Panc1 (cell line): ENCODE measurements at regions of chr6 and their contacts with region 1.

Region 1: DNA sequence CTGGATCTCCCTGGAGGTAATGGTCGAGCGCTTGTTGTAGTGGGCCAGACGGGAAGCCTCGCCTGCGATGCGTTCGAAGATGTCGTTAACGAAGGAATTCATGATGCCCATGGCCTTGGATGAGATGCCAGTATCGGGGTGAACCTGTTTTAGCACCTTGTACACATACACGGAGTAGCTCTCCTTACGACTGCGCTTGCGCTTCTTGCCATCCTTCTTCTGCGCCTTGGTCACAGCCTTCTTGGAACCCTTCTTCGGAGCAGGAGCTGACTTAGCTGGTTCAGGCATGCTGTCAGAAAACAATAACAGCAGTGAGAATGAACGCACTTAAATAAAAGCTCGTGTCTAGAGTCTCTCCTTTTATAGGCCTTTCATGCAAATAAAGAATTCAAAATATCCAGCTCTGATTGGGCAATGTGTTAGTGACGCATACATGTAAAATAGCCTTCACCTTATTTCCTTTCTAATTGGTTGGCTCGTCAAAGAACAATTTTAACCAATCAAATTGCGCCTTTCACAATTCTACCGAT is 129.2 kb downstream of the HFE start:
- DNase-seq: peak; percentile 99
- ATAC-seq: peak; percentile 79
- H3K4me3 ChIP-seq: peak overlapping the region; percentile 75 to 78
- H3K27ac ChIP-seq: peak overlapping the region; percentile 98
- H3K4me1 ChIP-seq: peaks cover 21% of the 10 kb centered on the region
- H3K27me3 ChIP-seq: no peaks in the 10 kb centered on the region
- CTCF ChIP-seq: no peak

Region 2: DNA sequence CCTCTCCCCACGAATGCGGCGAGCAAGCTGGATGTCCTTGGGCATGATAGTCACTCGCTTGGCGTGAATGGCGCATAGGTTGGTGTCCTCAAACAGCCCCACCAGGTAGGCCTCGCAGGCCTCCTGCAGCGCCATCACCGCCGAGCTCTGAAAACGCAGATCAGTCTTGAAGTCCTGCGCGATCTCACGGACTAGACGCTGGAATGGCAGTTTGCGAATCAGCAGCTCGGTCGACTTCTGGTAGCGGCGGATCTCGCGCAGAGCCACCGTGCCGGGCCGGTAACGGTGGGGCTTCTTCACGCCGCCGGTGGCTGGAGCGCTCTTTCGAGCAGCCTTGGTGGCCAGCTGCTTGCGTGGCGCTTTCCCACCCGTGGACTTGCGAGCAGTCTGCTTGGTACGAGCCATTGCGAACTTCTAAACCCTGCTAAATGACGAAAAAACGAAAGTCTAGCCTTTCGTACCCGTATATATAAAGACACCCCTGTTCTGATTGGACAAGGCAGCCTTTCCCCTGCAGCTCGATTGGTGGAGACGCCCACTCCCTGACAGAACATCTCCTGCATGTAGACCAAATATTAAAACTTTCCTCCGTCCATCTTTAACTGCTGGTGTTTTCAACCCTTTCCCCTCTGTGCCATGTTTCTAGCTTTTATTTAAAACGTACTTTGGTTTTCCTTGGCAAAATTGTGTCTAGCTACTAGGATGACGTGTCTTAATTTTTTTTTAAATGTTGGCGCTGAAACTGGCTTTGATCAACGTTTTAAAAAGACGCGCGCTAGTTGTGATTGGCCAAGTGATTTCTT is 19.4 kb before region 1 on chr6:
- CTCF ChIA-PET with region 1: no interaction called
- POLR2A ChIA-PET with region 1: interaction called, 42 read pairs
- in situ Hi-C with region 1: no loop called
- intact Hi-C with region 1: no loop called
- DNase-seq: peak; percentile 80
- ATAC-seq: peak; percentile 59
- H3K4me3 ChIP-seq: peak overlapping the region; percentile 80 to 85
- H3K27ac ChIP-seq: peak overlapping the region; percentile 97
- H3K4me1 ChIP-seq: peaks cover 27% of the 10 kb centered on the region
- H3K27me3 ChIP-seq: no peaks in the 10 kb centered on the region
- CTCF ChIP-seq: no peak

Region 3: DNA sequence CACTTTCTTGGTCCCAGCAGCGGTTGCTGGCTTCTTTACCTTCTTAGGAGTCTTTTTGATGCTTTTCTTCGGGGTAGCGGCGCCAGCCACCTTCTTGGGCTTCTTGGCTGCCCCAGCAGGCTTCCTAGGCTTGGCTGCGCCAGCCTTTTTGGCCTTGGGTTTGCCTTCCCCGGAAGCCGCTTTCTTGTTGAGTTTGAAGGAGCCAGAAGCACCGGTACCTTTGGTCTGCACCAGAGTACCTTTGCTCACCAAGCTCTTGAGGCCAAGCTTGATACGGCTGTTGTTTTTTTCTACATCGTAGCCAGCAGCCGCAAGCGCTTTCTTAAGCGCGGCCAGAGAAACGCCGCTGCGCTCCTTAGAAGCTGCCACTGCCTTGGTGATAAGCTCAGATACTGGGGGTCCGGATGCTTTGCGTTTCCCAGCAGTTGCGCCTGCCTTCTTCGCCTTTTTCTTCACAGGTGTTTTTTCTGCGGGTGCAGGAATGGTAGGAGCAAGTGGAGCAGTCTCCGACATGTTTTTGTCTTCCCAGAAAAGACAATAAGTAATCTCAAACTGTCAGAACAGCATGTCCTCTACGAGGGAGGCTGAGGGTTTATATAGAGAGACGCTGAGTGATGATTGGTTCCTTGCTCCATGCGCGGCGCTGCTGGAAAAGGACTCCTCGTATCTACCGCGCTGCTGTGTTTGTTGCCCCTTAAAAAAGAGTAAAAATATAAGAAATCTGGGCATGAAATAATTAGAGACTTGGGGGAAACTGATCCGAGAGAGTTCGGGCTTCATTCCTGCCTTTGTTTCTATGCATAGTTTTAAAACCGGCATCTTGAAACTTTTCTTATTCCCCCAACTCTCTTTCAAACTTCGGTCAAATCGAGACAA is 18.2 kb after region 1 on chr6:
- CTCF ChIA-PET with region 1: no interaction called
- POLR2A ChIA-PET with region 1: interaction called, 20 read pairs
- in situ Hi-C with region 1: no loop called
- intact Hi-C with region 1: no loop called
- DNase-seq: no peak
- ATAC-seq: peak; percentile 88
- H3K4me3 ChIP-seq: peak overlapping the region; percentile 78 to 87
- H3K27ac ChIP-seq: peak overlapping the region; percentile 99
- H3K4me1 ChIP-seq: peaks cover 25% of the 10 kb centered on the region
- H3K27me3 ChIP-seq: no peaks in the 10 kb centered on the region
- CTCF ChIP-seq: no peak

Region 4: GRCh38 chr6:26285143-26286134 is 69.0 kb after region 1 on chr6:
- CTCF ChIA-PET with region 1: interaction called, 3 read pairs
- POLR2A ChIA-PET with region 1: interaction called, 23 read pairs
- in situ Hi-C with region 1: no loop called
- intact Hi-C with region 1: loop called (anchors 2 kb)
- DNase-seq: peak; percentile 100
- ATAC-seq: peak; percentile 89
- H3K4me3 ChIP-seq: peak overlapping the region; percentile 66 to 96
- H3K27ac ChIP-seq: peak overlapping the region; percentile 95
- H3K4me1 ChIP-seq: peaks cover 12% of the 10 kb centered on the region; the same call in 1 of the 2 replicates
- H3K27me3 ChIP-seq: no peaks in the 10 kb centered on the region
- CTCF ChIP-seq: no peak

Region 5: GRCh38 chr6:26421259-26422144 is 205.1 kb after region 1 on chr6:
- CTCF ChIA-PET with region 1: no interaction called
- POLR2A ChIA-PET with region 1: no interaction called
- in situ Hi-C with region 1: no loop called
- intact Hi-C with region 1: no loop called
- DNase-seq: peak; percentile 69
- ATAC-seq: peak; percentile 100
- H3K4me3 ChIP-seq: peak overlapping the region; percentile 72 to 97
- H3K27ac ChIP-seq: peak overlapping the region; percentile 90
- H3K4me1 ChIP-seq: peaks cover 5% of the 10 kb centered on the region; the same call in 1 of the 2 replicates
- H3K27me3 ChIP-seq: no peaks in the 10 kb centered on the region
- CTCF ChIP-seq: no peak